Caco-2 (cell line): ENCODE measurements at regions of chrX and their contacts with region 1.

Region 1: GRCh38 chrX:149286940-149287349 is 218.2 kb downstream of the IDS start:
- DNase-seq: peak; percentile 21 to 33
- H3K4me3 ChIP-seq: no peak overlapping the region
- H3K4me3 Mint-ChIP-seq: no peak overlapping the region
- H3K27ac Mint-ChIP-seq: no peak overlapping the region
- H3K4me1 ChIP-seq: no peaks in the 10 kb centered on the region
- H3K4me1 Mint-ChIP-seq: no peaks in the 10 kb centered on the region
- H3K27me3 ChIP-seq: no peaks in the 10 kb centered on the region
- H3K27me3 Mint-ChIP-seq: peaks cover 3% of the 10 kb centered on the region
- CTCF ChIP-seq: peak; percentile 50 to 66

Region 2: GRCh38 chrX:148049441-148049840 is 1237.5 kb before region 1 on chrX:
- CTCF ChIA-PET with region 1: no interaction called
- POLR2A ChIA-PET with region 1: no interaction called
- intact Hi-C with region 1: loop called (anchors 2 kb)
- DNase-seq: peak in 1 of 2 experiments; percentile 12
- H3K4me3 ChIP-seq: no peak overlapping the region
- H3K4me3 Mint-ChIP-seq: no peak overlapping the region
- H3K27ac Mint-ChIP-seq: no peak overlapping the region
- H3K4me1 ChIP-seq: no peaks in the 10 kb centered on the region
- H3K4me1 Mint-ChIP-seq: no peaks in the 10 kb centered on the region
- H3K27me3 ChIP-seq: no peaks in the 10 kb centered on the region
- H3K27me3 Mint-ChIP-seq: no peaks in the 10 kb centered on the region
- CTCF ChIP-seq: peak; percentile 20 to 21

Region 3: DNA sequence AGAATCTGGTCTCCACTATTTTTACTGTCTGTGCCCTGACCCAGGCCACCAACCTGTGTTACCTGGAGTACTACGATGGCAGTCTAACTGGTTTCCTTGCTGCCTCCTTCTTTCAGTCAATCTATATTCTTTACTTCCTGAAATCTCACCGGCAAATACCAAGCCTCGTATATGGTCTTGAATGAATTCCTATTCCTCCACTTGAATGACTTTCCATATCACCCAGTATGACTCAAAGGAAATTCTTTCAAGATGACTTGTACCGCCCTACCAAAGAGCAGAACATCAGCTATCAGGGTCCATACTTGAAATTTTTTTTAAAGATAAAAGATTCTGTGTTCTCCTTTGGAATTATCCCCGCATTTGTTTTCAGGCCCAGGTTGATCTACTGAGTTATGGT is 408.6 kb before region 1 on chrX:
- CTCF ChIA-PET with region 1: interaction called, 3 read pairs
- POLR2A ChIA-PET with region 1: no interaction called
- intact Hi-C with region 1: loop called (anchors 5 kb)
- DNase-seq: peak in 1 of 2 experiments; percentile 0
- H3K4me3 ChIP-seq: no peak overlapping the region
- H3K4me3 Mint-ChIP-seq: no peak overlapping the region
- H3K27ac Mint-ChIP-seq: peak overlapping the region; percentile 57
- H3K4me1 ChIP-seq: peaks cover 8% of the 10 kb centered on the region
- H3K4me1 Mint-ChIP-seq: no peaks in the 10 kb centered on the region
- H3K27me3 ChIP-seq: no peaks in the 10 kb centered on the region
- H3K27me3 Mint-ChIP-seq: no peaks in the 10 kb centered on the region
- CTCF ChIP-seq: no peak

Region 4: GRCh38 chrX:149074398-149074797 is 212.5 kb before region 1 on chrX:
- CTCF ChIA-PET with region 1: no interaction called
- POLR2A ChIA-PET with region 1: no interaction called
- intact Hi-C with region 1: no loop called
- DNase-seq: no peak
- H3K4me3 ChIP-seq: no peak overlapping the region
- H3K4me3 Mint-ChIP-seq: no peak overlapping the region
- H3K27ac Mint-ChIP-seq: no peak overlapping the region
- H3K4me1 ChIP-seq: no peaks in the 10 kb centered on the region
- H3K4me1 Mint-ChIP-seq: no peaks in the 10 kb centered on the region
- H3K27me3 ChIP-seq: no peaks in the 10 kb centered on the region
- H3K27me3 Mint-ChIP-seq: no peaks in the 10 kb centered on the region
- CTCF ChIP-seq: no peak

Region 5: GRCh38 chrX:149151805-149152757 is 134.9 kb before region 1 on chrX:
- CTCF ChIA-PET with region 1: interaction called, 3 read pairs
- POLR2A ChIA-PET with region 1: no interaction called
- intact Hi-C with region 1: loop called (anchors 5 kb)
- DNase-seq: no peak
- H3K4me3 ChIP-seq: no peak overlapping the region
- H3K4me3 Mint-ChIP-seq: no peak overlapping the region
- H3K27ac Mint-ChIP-seq: no peak overlapping the region
- H3K4me1 ChIP-seq: no peaks in the 10 kb centered on the region
- H3K4me1 Mint-ChIP-seq: no peaks in the 10 kb centered on the region
- H3K27me3 ChIP-seq: no peaks in the 10 kb centered on the region
- H3K27me3 Mint-ChIP-seq: no peaks in the 10 kb centered on the region
- CTCF ChIP-seq: no peak

Region 6: GRCh38 chrX:149470955-149471354 is 184.0 kb after region 1 on chrX:
- CTCF ChIA-PET with region 1: no interaction called
- POLR2A ChIA-PET with region 1: no interaction called
- intact Hi-C with region 1: loop called (anchors 5 kb)
- DNase-seq: peak; percentile 65 to 77
- H3K4me3 ChIP-seq: no peak overlapping the region
- H3K4me3 Mint-ChIP-seq: no peak overlapping the region
- H3K27ac Mint-ChIP-seq: no peak overlapping the region
- H3K4me1 ChIP-seq: no peaks in the 10 kb centered on the region
- H3K4me1 Mint-ChIP-seq: no peaks in the 10 kb centered on the region
- H3K27me3 ChIP-seq: no peaks in the 10 kb centered on the region
- H3K27me3 Mint-ChIP-seq: peaks cover under 1% of the 10 kb centered on the region
- CTCF ChIP-seq: peak; percentile 62 to 73